ENCODE measurements at regions of chr7 and their contacts with region 1.

Region 1: DNA sequence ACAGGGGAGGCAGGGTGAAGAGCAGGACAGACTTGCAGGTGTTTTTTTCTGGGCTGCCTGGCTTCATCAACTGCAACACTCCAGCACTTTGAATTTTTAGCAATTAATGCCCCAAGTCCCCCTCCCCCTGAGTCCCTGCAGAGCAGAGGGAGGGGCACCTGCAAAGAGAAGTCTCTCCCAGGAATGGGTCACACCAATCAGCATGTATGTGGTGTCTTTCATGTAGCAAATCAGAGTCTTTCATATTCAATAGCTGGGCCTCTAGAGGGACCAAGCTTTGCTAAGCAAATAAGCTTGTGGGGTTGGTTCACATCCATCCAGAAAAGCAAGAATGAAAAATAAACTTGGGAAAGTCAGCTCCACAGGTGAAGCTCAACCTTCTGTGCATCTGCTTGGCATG is 90.7 kb downstream of the PARP12 start:
- DNase-seq: no peak

Region 2: DNA sequence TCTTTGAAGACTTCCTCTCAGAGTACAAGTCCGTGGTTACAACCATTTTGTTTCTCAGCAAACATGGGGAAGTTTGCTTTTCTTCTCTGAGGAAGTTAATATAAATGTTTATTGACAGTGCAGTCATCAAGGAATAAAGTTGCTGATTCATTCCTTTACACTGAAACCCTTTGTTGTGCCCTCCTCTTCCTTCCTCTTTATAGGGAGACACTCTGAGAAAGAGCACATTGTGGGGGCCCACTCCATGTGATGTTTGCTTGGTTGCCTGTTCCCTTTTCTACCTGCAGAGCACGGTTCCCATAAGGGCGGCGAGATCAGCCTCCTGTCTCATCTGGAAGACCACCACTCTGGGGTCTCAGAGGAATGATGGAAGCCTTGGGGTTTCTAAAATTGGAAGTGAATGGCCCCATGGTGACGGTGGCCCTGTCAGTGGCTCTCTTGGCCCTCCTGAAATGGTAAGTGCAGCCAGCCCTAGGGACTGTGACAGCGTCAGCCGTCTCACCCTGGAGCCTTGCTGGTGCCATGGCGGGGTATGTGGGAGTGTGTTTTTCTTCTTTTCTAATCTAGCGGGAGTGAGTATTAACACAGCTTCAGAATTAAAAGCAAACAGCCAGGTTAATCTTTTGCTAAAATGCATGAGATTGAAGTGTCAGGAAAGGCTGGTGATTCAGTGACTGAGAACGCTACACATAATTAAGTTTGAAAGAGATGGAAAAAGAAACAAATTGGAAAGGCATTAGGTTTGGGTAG is 142.8 kb before region 1 on chr7 and contains the start of gene TBXAS1:
- intact Hi-C with region 1: loop called (anchors 10 kb)
- DNase-seq: peak; percentile 83
- total RNA-seq, gene TBXAS1: 4.3 TPM

Region 3: DNA sequence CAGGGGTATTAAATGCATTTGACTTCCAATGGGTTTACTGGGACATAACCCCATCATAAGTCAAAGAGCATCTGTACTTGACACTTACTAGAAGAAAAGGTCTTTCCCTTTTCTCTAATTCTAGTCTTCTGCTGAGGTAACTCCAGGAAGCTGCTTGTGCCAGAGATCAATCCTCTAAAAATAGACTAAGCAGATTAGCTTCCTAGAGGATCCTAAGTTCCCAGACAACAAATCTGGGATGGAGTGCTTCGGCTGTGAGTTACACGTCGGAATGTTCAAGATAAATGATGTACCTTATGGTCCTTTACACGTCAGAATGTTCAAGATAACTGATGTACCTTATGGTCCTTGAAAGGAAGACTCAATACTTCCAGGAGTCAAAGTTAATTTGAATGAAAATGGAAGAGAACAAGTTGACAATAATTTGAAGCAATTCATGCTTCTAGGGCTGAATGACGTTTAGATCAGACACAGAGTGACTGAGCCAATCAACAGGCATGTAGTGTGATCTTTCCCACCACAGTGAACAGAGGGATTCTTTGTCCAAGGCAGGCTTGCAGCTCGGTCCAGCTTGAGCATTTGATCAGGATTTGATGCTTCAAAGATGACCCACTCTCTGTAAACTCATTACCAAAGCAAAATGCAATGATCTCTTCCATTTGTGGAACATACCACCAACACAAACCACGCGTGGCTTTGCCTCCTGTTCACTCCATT is 362.5 kb after region 1 on chr7:
- intact Hi-C with region 1: no loop called
- DNase-seq: no peak